ENCODE measurements at regions of chr2 and their contacts with region 1.

Region 1: GRCh38 chr2:11762799-11763461 is 16.5 kb downstream of the LPIN1 start:
- DNase-seq: no peak
- ATAC-seq: no peak
- H3K4me3 Mint-ChIP-seq: no peak overlapping the region
- H3K27ac Mint-ChIP-seq: peak overlapping the region; percentile 64
- H3K4me1 Mint-ChIP-seq: peaks cover 32% of the 10 kb centered on the region
- H3K27me3 Mint-ChIP-seq: no peaks in the 10 kb centered on the region

Region 2: GRCh38 chr2:11698009-11698922 is 64.7 kb before region 1 on chr2:
- CTCF ChIA-PET with region 1: interaction called, 8 read pairs
- POLR2A ChIA-PET with region 1: no interaction called
- intact Hi-C with region 1: loop called in 1 of 2 experiments (anchors 2 kb)
- DNase-seq: no peak
- ATAC-seq: no peak
- H3K4me3 Mint-ChIP-seq: no peak overlapping the region
- H3K27ac Mint-ChIP-seq: no peak overlapping the region
- H3K4me1 Mint-ChIP-seq: no peaks in the 10 kb centered on the region
- H3K27me3 Mint-ChIP-seq: no peaks in the 10 kb centered on the region

Measured in activated CD4-positive, alpha-beta T cell treated with anti-CD3 and anti-CD28 coated beads for 36 hours (primary cell).